Esophagus squamous epithelium (tissue), 5 donors: ENCODE measurements at regions of chr9 and their contacts with region 1.

Region 1: DNA sequence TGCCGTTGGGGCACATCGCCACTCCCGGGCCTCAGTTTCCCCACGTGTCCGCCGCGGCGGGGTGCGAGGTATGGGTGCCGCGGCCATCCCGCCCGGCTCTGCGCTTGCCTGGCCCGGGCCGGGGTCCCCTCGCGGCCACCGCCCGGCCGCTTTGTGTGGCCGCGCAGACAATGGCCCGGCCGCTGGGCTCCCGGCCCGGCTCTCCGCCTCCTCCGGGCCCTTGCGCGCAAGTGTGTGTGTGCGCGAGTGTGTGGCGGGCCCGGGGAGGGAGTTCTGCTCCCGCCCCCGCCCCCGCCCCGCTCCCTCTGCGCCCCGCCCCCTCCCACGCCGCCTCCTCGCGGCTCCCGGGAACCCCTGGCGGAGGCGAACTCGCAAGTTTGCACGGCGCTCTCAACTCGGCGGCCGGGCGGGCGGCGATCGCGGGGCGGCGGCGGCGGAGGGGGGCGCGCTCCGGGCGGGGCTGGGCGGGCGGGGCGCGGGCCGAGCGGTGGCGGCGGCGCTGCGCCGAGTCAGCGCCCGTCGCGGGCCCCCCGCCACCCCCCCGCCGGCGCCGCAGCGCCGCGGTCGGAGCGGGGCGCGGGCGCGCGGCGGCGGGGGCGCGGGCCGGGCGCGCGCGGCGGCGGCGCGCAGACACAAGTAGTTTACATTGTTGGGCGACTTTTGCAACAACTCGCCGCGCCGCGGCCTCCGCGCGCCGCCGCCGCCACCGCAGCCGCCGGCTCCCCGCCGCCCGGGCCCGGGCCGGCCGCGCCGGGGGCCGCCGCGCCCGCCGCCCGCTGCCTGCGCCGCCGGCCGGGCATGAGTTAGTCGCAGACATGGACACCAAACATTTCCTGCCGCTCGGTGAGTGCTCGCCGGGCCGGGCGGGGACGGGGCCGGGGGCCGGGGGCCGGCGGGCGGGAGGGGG is at the start of gene RXRA:
- DNase-seq: no peak
- H3K4me3 ChIP-seq: peak within 1 kb of the TSS; percentile 66 to 95 (median 84)
- H3K27ac ChIP-seq: peak within 1 kb of the TSS; percentile 94 to 99 (median 97)
- H3K4me1 ChIP-seq: peaks cover 45 to 80% (median 54%) of the 10 kb centered on the region in 3 donors
- H3K27me3 ChIP-seq: no peaks in the 10 kb centered on the region
- CTCF ChIP-seq: no peak
- POLR2A ChIP-seq: peak in 3 of 4 donors; percentile 61 to 94 (median 89)
- total RNA-seq, gene RXRA: 41.8 to 83.1 (median 50.4) TPM

Region 2: DNA sequence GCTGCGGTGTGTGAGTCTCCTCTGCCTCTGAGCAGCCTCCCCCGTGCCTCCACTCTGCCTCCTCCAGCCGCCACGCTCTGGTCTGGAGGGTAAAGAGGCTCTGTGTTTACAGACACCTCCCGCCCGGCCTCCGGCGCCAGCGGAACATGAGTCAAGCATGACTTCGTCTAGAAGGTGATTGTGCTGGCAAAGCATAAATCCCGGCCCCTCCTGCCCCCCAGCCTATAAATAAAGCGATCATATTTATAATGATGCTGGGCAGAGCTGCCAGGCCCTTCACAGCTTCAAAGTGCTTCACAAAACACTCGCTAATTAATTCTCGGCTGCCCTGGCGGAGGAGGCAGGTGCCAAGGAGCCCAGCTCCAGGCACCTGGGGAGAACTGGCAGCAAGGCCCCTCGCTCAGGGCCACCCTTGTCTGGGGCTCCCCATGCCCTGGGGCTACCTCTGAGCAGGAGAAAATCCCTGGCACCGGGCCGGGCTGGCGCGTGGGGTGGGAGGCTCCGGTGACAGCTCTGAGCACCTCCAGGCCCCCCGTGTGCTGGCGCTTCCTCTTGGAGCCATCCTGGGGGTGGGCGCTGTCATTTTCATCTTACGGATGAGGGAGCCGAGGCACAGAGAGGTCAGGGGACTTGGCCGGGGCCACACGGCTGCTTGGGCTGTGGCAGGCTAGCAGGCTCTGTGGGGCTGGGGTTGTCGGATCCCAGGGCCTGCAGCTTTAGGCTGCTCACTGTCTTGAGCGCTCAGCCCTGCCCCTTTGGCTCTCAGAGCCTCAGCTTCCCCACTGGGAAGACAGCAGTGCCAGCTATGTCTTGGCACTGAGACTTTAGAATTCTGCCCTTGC is 88.0 kb after region 1 on chr9:
- intact Hi-C with region 1: loop called (anchors 10 kb)
- DNase-seq: no peak
- H3K4me3 ChIP-seq: no peak overlapping the region
- H3K27ac ChIP-seq: peak overlapping the region; percentile 28 to 91 (median 68)
- H3K4me1 ChIP-seq: peaks cover 51 to 82% (median 59%) of the 10 kb centered on the region in 3 donors
- H3K27me3 ChIP-seq: no peaks in the 10 kb centered on the region
- CTCF ChIP-seq: no peak
- POLR2A ChIP-seq: no peak

Region 3: DNA sequence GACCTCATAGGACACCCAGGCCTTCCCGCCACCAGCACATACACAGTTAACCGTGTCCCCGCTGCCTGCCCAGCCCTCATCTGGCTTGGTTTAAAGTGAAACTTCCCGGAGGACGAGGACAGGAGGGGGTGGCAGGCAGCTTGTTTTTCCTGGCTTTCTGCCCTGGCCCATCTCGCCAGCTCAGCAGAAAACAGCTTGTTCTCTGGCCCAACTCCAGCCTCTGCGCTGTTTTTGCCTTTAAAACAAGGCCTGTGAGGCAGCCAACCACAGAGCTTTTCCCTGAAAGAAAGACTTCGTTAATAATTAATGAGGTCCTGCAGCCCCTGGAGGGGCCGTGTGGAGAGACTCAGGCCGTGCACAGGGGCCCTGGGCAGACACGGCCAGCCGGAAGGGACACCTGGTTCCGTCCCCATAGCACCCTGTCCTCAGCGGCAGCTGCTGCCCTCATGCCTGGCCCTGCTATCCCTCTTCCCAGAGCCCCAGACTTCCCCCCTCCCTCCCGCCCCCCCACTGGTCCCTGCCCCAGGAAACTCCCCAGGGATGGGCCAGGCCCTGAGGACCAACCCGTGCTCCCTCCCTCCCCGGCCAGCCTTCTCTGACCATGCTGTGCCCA is 108.9 kb after region 1 on chr9:
- intact Hi-C with region 1: no loop called
- DNase-seq: no peak
- H3K4me3 ChIP-seq: peak overlapping the region in 2 of 4 donors; percentile 20 to 53
- H3K27ac ChIP-seq: peak overlapping the region; percentile 87 to 95 (median 92)
- H3K4me1 ChIP-seq: peaks cover 69 to 88% (median 76%) of the 10 kb centered on the region in 3 donors
- H3K27me3 ChIP-seq: no peaks in the 10 kb centered on the region
- CTCF ChIP-seq: no peak
- POLR2A ChIP-seq: no peak

Region 4: GRCh38 chr9:134458207-134458845 is 132.3 kb after region 1 on chr9:
- intact Hi-C with region 1: no loop called
- DNase-seq: no peak
- H3K4me3 ChIP-seq: no peak overlapping the region
- H3K27ac ChIP-seq: peak overlapping the region in 3 of 4 donors; percentile 21 to 95 (median 91)
- H3K4me1 ChIP-seq: peaks cover 18 to 43% (median 18%) of the 10 kb centered on the region in 3 donors
- H3K27me3 ChIP-seq: peaks cover 0 to 12% (median 0%) of the 10 kb centered on the region in 4 donors
- CTCF ChIP-seq: no peak
- POLR2A ChIP-seq: no peak

Region 5: DNA sequence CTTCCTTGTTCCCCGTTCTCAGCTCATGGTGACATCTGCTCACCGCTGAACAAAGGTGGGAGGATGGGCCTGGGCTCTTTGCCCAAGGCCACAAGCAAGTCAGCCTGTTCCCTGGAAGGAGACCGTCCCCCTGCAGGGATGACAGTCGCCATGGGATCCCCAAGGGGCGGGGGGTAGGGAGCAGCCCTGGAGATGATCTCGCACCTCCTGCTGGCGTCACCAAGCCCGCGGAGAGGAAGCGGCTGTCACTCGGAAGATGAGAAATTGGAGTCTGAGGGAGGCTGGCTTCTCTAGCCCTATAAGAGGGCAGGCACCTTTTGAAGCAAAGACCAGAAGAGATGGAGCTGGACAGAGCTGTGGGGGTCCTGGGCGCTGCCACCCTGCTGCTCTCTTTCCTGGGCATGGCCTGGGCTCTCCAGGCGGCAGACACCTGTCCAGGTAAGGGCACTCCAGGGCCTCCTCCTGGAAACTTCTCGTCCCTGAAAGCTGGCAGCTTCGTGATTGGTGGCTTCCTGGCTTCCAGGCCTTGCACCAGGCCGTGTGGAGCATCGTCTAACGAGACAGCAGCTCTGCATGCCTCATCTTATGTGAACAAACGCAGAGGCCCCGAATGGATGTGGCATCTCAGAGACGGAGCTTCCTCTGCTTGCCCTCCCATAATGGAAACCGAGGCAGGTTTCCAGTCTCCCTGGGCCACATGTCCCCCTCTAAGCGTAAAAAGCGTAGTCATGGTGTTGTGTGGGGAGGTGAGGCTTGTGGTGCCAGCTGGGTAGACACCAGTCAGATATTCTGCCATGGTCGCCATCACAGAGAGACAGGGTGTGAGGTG is 554.6 kb after region 1 on chr9 and contains the start of gene FCN2:
- intact Hi-C with region 1: no loop called
- DNase-seq: no peak
- H3K4me3 ChIP-seq: no peak within 1 kb of the TSS
- H3K27ac ChIP-seq: no peak within 1 kb of the TSS
- H3K4me1 ChIP-seq: no peaks in the 10 kb centered on the region
- H3K27me3 ChIP-seq: peaks cover 0 to 36% (median 0%) of the 10 kb centered on the region in 4 donors
- CTCF ChIP-seq: no peak
- POLR2A ChIP-seq: no peak
- total RNA-seq, gene FCN2: not detected